ENCODE measurements at regions of chr6 and their contacts with region 1.

Region 1: DNA sequence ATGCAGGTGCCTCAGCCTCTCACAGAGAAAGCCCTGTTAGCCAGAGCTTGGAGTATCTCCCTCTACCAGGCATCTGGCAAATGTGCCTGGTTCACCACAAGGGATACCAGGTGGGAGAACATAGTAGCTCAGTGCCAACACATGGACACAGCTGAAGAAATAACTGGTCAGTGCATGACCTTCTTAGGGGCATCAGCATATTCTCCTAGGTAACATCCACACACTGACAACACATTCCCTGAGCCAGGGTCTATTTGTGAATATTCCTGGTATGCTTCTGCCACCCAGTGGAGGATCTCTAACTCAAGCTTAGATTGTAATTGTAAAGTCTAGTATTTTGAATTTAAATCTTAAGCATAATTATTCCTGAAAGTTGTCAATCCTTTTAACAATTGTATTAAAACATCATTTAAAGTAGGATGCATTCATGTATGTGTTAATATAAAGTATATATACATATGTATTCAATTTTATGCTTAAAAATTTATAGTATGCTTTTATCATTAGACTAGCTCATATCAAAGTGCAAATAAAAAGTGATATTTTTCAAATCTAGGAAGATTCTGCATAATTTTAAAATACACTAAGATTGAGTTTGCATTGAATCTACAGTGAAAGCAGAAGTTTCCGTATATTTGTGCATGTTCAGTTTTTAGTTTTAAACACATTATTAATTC is 45.3 kb upstream of the COL21A1 start:
- DNase-seq: peak; percentile 88
- H3K4me3 ChIP-seq: no peak overlapping the region
- H3K27ac ChIP-seq: no peak overlapping the region
- H3K4me1 ChIP-seq: peaks cover 5% of the 10 kb centered on the region
- H3K27me3 ChIP-seq: no peaks in the 10 kb centered on the region
- CTCF ChIP-seq: peak; percentile 30 to 38
- POLR2A ChIP-seq: no peak

Region 2: DNA sequence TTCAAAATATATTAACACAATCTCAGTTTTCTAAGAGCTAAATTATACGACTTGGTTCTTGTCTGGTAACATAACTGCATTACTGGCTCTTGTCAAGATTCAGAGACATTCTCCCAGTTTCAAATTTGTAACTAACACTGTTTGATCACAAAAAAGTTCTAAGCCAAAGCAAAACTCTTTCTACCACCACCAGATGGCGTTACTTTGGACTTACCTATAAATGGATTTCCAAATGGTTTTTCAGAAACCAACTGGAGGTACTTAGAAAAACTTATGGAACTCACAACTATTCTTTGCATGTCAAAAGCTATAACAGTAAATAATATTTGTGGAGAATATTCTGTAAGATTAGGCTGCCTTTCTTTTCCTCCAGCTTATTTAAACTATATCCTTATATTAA is 999.5 kb before region 1 on chr6:
- CTCF ChIA-PET with region 1: interaction called, 3 read pairs
- POLR2A ChIA-PET with region 1: no interaction called
- dilution Hi-C with region 1: no loop called
- intact Hi-C with region 1: loop called (anchors 5 kb)
- DNase-seq: no peak
- H3K4me3 ChIP-seq: no peak overlapping the region
- H3K27ac ChIP-seq: no peak overlapping the region
- H3K4me1 ChIP-seq: no peaks in the 10 kb centered on the region
- H3K27me3 ChIP-seq: no peaks in the 10 kb centered on the region
- CTCF ChIP-seq: peak in 1 of 2 donors; percentile 24
- POLR2A ChIP-seq: no peak

Region 3: GRCh38 chr6:55886185-55886836 is 406.3 kb before region 1 on chr6:
- CTCF ChIA-PET with region 1: interaction called, 7 read pairs
- POLR2A ChIA-PET with region 1: no interaction called
- dilution Hi-C with region 1: no loop called
- intact Hi-C with region 1: loop called (anchors 1 kb)
- DNase-seq: peak; percentile 30
- H3K4me3 ChIP-seq: no peak overlapping the region
- H3K27ac ChIP-seq: no peak overlapping the region
- H3K4me1 ChIP-seq: peaks cover 18% of the 10 kb centered on the region
- H3K27me3 ChIP-seq: no peaks in the 10 kb centered on the region
- CTCF ChIP-seq: peak in 1 of 2 donors; percentile 13
- POLR2A ChIP-seq: no peak

Region 4: GRCh38 chr6:55980627-55981211 is 311.9 kb before region 1 on chr6:
- CTCF ChIA-PET with region 1: interaction called, 97 read pairs
- POLR2A ChIA-PET with region 1: no interaction called
- dilution Hi-C with region 1: no loop called
- intact Hi-C with region 1: loop called (anchors 1 kb)
- DNase-seq: peak; percentile 66
- H3K4me3 ChIP-seq: no peak overlapping the region
- H3K27ac ChIP-seq: no peak overlapping the region
- H3K4me1 ChIP-seq: no peaks in the 10 kb centered on the region
- H3K27me3 ChIP-seq: no peaks in the 10 kb centered on the region
- CTCF ChIP-seq: peak; percentile 39
- POLR2A ChIP-seq: no peak

Region 5: DNA sequence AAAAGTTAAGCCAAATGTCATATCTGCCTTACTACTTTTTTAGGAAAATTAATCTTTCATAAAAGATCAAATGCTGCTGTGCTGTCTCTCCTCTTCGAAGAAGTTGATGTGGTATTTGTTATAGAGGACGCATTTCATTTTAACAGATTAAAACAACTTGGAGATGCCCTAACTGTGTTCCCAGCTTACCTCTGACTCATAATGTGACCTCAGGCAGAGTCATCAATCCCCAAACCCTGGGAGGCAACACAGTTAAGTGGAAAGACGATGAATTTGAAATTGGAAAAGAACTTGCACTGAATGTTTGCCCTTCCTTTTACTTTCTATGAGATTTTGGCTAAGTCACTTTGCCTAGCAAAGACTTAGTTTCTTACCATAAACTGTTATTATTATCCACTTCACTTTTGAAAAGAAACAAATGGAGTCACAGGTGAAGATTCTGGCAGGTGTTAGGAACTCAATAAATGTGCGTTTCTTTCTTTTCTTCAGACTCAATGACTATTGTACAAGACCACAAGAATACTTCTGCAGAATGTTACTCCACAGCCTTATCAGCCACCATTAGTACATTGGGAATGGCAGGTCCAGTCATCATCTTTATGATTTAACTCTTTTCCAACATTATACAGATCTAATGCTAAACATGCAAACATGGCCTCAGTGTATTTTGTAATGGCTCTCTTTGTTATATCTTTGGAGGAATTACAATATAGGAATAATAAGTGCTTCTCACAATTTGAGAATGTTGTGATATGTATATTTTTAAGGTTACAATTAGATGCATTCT is 147.9 kb before region 1 on chr6:
- CTCF ChIA-PET with region 1: interaction called, 3 read pairs
- POLR2A ChIA-PET with region 1: no interaction called
- dilution Hi-C with region 1: no loop called
- intact Hi-C with region 1: loop called (anchors 5 kb)
- DNase-seq: peak; percentile 41
- H3K4me3 ChIP-seq: no peak overlapping the region
- H3K27ac ChIP-seq: no peak overlapping the region
- H3K4me1 ChIP-seq: peaks cover 33% of the 10 kb centered on the region
- H3K27me3 ChIP-seq: no peaks in the 10 kb centered on the region
- CTCF ChIP-seq: no peak
- POLR2A ChIP-seq: no peak

Region 6: GRCh38 chr6:56155634-56156143 is 137.0 kb before region 1 on chr6:
- CTCF ChIA-PET with region 1: no interaction called
- POLR2A ChIA-PET with region 1: no interaction called
- dilution Hi-C with region 1: no loop called
- intact Hi-C with region 1: no loop called
- DNase-seq: no peak
- H3K4me3 ChIP-seq: no peak overlapping the region
- H3K27ac ChIP-seq: no peak overlapping the region
- H3K4me1 ChIP-seq: no peaks in the 10 kb centered on the region
- H3K27me3 ChIP-seq: no peaks in the 10 kb centered on the region
- CTCF ChIP-seq: no peak
- POLR2A ChIP-seq: no peak